ENCODE measurements at regions of chr6 and their contacts with region 1.

Region 1: DNA sequence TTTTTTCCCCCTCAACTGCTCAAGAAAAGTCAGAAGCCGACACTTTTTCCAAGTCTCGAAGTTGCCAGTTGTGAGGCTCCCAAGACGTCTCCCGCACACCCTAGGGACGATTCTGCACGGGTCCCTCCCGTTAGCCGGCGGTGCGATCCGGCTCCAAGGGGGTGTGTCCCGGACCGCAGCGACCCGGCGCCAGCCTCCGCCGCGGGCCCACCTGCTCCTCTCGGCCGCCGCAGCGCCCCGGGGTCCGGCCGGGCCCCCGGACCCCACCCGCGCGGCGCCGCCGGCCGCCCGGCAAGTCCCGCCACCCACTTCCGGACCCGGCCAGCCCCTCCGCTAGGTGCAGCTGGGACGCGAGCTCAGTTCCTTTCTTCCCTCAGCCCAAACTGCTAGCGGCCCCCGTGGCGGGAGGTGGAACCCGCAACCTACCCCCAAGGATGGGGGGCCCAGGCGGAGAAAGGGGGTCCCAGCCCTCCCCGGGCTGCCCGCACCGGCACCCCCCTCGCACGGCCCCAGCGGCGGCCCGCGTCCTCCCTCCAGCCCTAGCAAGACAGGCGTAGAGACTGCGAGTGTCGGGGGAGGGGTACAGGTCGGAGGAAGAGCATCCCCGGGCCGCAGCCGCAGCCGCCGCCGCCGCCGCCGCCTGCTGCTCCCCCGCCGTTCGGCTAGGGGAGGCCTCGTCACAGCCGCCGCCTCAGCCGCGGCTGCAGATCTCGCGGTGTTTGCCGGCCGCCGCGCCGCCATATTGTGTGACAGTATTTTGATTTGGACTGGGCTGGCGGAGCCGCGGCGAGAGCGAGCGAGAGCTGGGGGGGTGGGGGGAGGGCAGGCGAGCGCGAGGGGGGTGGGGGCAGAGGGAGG is 485 bp upstream of the TAB2 start:
- DNase-seq: peak; percentile 95
- H3K4me3 ChIP-seq: peak overlapping the region; percentile 93 to 99 (median 95)
- H3K27ac ChIP-seq: peak overlapping the region; percentile 97 to 99 (median 99)
- H3K4me1 ChIP-seq: peaks cover 0 to 37% (median 27%) of the 10 kb centered on the region in 4 donors
- H3K27me3 ChIP-seq: no peaks in the 10 kb centered on the region
- CTCF ChIP-seq: peak in 2 of 4 experiments; percentile 14 to 15
- EP300 ChIP-seq: no peak
- POLR2A ChIP-seq: peak; percentile 50 to 60

Region 2: DNA sequence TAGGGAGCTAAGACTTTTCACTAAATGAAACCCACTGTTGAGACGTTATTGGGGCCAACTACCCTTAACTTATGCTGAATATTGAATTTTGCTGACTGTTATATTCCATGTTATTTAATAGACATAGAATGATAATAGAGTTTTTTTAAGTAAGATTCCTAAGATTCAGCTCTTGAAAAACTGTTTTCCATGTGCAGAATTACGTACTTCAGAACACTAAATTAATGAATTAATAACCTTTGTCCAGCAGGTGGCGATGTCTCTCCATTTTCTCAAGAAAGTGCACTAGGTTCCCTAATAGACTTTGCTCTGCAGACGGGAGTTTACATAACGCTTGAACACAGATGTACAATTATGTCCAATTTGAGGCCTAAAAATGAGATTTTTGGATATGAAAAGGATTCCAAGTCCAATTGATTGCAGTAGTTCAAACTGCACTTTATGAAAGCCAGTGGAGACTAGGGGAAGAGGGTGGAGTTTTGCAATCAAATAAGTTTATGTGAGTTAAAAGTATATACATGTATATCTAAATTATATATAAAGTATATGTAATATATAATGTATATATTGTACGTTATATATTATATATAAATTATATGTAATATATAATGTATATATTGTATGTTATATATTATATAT is 288.1 kb before region 1 on chr6:
- intact Hi-C with region 1: loop called (anchors 5 kb)
- DNase-seq: peak; percentile 85
- H3K4me3 ChIP-seq: no peak overlapping the region
- H3K27ac ChIP-seq: peak overlapping the region in 1 of 4 donors; percentile 20
- H3K4me1 ChIP-seq: peaks cover 0 to 23% (median 20%) of the 10 kb centered on the region in 4 donors
- H3K27me3 ChIP-seq: no peaks in the 10 kb centered on the region
- CTCF ChIP-seq: peak; percentile 49 to 73 (median 66)
- EP300 ChIP-seq: no peak
- POLR2A ChIP-seq: no peak

Region 3: DNA sequence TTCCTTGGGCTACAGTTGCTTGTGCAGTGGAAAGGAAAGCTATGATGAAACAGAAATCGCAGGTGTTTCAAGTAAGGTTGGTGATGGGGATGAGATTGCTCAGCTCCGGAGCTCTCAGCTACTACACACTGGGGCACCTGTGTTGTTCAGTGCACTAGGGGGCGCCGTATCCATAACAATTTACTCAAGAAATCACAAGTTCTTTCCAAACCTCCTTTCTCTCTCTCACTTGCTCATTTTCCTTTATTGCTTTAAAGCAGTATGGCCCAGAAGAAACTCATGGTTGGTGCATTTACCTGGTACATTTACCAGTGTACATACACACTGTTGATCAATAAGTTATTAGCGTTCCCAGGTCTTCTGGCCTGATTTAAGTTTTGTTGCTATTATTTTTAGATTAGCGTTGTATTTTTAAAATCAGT is 234.7 kb before region 1 on chr6:
- intact Hi-C with region 1: loop called (anchors 5 kb)
- DNase-seq: peak; percentile 88
- H3K4me3 ChIP-seq: no peak overlapping the region
- H3K27ac ChIP-seq: no peak overlapping the region
- H3K4me1 ChIP-seq: peaks cover 0 to 44% (median 31%) of the 10 kb centered on the region in 4 donors
- H3K27me3 ChIP-seq: no peaks in the 10 kb centered on the region
- CTCF ChIP-seq: peak; percentile 60 to 79 (median 76)
- EP300 ChIP-seq: no peak
- POLR2A ChIP-seq: no peak

Region 4: GRCh38 chr6:149170564-149171452 is 146.2 kb before region 1 on chr6:
- intact Hi-C with region 1: loop called (anchors 5 kb)
- DNase-seq: peak; percentile 69
- H3K4me3 ChIP-seq: no peak overlapping the region
- H3K27ac ChIP-seq: peak overlapping the region; percentile 17 to 51 (median 48)
- H3K4me1 ChIP-seq: peaks cover 0 to 27% (median 24%) of the 10 kb centered on the region in 4 donors
- H3K27me3 ChIP-seq: no peaks in the 10 kb centered on the region
- CTCF ChIP-seq: no peak
- EP300 ChIP-seq: no peak
- POLR2A ChIP-seq: no peak

Region 5: DNA sequence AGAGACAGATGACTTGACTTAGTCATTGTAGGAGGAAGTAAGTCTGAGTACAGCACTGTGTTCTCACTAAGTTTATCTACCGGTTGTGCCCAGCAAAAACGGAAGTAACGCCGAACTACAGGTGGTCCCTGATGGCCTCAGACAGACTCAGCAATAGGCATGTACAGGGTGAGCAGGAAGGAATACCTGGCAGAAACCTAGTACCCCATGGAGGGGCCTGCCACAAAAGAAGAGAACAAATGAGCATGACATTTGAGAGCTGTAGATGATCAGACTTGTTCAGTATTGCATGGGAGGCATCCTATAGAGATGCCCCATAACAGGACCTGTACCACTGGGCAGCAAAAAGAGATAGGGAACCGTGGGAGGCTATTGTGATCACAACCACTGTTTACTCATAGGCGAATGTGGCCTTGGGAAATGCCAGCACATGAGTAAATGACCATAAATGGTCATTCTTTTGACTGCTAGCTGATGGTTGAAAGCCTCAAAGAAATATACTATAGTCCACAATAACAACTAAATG is 105.9 kb before region 1 on chr6:
- intact Hi-C with region 1: loop called (anchors 5 kb)
- DNase-seq: no peak
- H3K4me3 ChIP-seq: no peak overlapping the region
- H3K27ac ChIP-seq: peak overlapping the region in 3 of 4 donors; percentile 32 to 80 (median 62)
- H3K4me1 ChIP-seq: peaks cover 0 to 54% (median 41%) of the 10 kb centered on the region in 4 donors
- H3K27me3 ChIP-seq: no peaks in the 10 kb centered on the region
- CTCF ChIP-seq: no peak
- EP300 ChIP-seq: no peak
- POLR2A ChIP-seq: no peak

Region 6: DNA sequence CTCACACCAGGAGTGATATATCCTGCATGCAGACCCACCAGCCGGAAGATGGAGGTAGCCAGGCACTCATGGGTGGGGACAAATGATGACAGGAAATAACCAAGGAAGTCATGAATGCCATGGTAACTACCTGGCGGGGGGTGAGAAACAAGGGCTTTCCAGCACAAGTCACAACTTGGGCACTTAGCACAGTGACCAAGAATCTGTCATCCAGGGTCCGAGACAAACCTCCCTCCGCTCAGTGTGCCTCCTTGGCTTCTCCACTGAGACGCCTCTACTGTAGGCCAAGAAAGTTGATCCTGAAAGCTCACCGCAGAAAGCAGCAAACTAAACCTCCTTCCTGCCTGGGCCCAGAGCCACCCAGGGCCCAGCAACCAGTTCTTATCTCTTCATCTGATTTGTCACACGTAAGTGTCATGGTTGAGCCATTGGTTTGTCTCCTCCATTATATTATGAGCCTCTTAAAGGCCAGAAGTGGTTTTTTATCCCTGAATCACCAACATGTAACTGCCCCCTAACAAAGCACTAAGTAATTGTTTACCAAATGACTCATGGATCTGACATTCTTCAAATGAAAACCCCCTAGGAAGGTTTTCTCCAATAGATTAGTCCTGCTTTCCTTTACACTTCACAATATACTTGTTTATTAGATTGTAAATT is 83.8 kb before region 1 on chr6:
- intact Hi-C with region 1: loop called (anchors 5 kb)
- DNase-seq: no peak
- H3K4me3 ChIP-seq: no peak overlapping the region
- H3K27ac ChIP-seq: no peak overlapping the region
- H3K4me1 ChIP-seq: peaks cover 0 to 25% (median 17%) of the 10 kb centered on the region in 4 donors
- H3K27me3 ChIP-seq: no peaks in the 10 kb centered on the region
- CTCF ChIP-seq: no peak
- EP300 ChIP-seq: no peak
- POLR2A ChIP-seq: no peak

Region 7: DNA sequence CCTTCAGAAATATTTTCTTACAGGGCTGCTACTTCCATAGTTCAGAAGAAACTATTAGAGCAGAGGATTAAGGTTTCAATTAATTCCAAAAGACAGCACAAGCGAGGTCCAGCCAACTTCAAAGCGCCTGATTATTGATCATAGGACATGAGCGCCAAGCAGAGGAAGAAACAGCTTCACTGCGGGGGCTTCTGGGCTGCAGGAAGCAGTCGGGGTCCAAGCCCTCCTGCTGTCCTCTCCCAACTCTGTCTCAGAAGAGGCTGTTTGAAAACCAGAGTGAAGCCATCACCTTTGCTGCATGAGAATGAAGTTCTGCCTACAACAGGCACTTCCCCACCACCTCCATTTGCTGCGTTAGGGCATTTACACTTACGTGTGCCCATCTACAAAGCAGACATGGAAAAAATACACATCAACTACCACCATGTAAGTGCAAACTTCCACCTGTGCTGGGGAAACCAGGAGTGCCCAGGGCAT is 107.0 kb after region 1 on chr6:
- intact Hi-C with region 1: loop called (anchors 5 kb)
- DNase-seq: no peak
- H3K4me3 ChIP-seq: no peak overlapping the region
- H3K27ac ChIP-seq: peak overlapping the region in 2 of 4 donors; percentile 40 to 58
- H3K4me1 ChIP-seq: peaks cover 0 to 15% (median 9%) of the 10 kb centered on the region in 4 donors
- H3K27me3 ChIP-seq: no peaks in the 10 kb centered on the region
- CTCF ChIP-seq: no peak
- EP300 ChIP-seq: no peak
- POLR2A ChIP-seq: no peak